ENCODE measurements at regions of chr9 and their contacts with region 1.

Region 1: GRCh38 chr9:124771021-124771866 is at the start of gene NR6A1:
- DNase-seq: peak; percentile 95
- H3K4me3 Mint-ChIP-seq: peak within 1 kb of the TSS; percentile 83
- H3K27ac Mint-ChIP-seq: peak within 1 kb of the TSS; percentile 74
- H3K4me1 Mint-ChIP-seq: peaks cover 30% of the 10 kb centered on the region
- H3K27me3 Mint-ChIP-seq: peaks cover 62% of the 10 kb centered on the region
- total RNA-seq, gene NR6A1: 1.8 TPM

Region 2: DNA sequence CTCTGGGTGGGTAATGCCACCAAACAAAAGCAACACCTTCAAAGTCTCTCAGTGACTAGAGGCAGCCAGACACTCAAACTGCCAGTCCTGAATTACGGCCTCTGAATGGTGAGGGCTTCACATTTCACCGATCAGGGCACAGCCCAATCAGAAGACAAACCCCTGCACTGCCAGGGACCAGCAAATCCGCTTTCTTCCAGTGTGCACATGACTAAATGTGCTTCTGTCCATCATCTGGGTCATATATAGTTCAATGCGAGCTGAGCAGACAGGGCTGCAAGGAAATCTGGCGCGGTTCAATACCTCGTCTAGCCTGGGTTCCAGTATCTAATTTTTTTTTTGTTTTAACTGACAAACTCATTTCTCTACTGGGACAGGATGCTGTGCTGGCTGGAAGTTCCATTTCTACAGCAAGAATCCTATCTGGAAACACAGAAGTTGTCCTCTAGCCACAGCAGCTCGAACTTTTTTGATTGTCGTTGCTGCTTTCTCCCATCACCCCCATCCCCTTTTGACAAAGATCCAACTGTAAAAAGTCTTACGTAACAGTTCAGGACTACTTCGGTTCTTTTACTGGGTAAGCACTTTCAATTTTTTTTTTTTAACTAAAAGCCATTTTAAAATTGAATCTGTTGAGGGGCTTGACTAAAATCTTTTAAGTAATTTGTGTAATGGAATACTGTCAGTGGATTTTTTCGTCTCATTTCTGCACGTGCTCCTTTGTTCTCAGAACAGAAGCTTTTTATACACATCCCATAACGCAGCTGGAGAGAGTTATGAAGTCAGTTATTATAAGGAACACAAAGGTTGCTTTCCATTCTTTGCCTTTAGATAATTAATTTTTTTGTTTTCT is 112.9 kb before region 1 on chr9:
- CTCF ChIA-PET with region 1: no interaction called
- intact Hi-C with region 1: loop called (anchors 2 kb)
- DNase-seq: peak; percentile 75
- H3K4me3 Mint-ChIP-seq: peak overlapping the region; percentile 95
- H3K27ac Mint-ChIP-seq: peak overlapping the region; percentile 89
- H3K4me1 Mint-ChIP-seq: peaks cover 11% of the 10 kb centered on the region
- H3K27me3 Mint-ChIP-seq: no peaks in the 10 kb centered on the region

Region 3: GRCh38 chr9:124735121-124735520 is 36.1 kb before region 1 on chr9:
- CTCF ChIA-PET with region 1: interaction called, 3 read pairs
- intact Hi-C with region 1: loop called (anchors 2 kb)
- DNase-seq: peak; percentile 20
- H3K4me3 Mint-ChIP-seq: no peak overlapping the region
- H3K27ac Mint-ChIP-seq: no peak overlapping the region
- H3K4me1 Mint-ChIP-seq: peaks cover 16% of the 10 kb centered on the region
- H3K27me3 Mint-ChIP-seq: peaks cover 18% of the 10 kb centered on the region

Region 4: DNA sequence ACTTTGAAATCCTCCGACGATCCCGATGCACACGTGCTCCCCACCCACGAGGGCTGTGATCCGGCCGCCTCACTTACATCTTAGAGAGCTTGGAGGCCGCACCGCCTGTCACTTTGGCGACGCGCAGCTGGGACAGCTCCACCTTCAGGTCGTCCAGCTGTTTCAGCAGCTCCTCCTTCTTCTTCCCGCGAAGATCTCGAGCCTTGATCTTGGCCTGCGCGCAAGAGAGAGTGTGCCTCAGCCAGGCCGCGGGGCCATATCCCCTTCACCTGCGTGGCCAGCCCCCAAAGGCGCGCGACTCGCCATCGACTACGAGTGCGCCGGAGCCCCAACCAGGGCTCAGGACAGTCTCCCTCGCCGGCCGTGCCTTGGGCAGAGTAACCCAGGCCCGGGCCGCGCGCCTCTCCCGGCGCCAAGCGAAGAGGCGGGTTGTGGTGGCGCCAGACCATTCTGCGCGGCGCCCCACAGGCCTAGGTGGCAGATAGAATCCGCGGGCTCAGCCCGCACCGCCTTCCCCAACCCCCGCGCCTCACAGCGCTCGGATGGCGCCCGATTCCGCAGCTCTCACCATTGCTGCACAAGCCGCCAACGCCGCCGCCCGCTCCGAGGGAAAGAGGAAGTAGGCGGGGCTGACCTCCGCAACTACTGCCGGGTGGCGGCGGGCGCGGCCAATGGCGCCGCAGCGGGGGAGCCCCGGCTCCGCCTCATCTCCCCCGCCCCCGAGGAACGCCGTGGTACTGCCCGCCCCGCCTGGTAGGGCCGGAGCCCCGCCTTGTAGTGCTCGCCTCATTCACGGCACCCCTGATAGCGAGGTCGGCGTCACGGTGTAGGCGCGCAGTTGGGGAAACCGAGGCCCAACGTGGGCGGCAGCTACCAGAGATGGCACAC is 90.3 kb after region 1 on chr9 and contains the starts of genes ARPC5L and RPL35:
- CTCF ChIA-PET with region 1: interaction called, 36 read pairs
- intact Hi-C with region 1: loop called (anchors 2 kb)
- DNase-seq: peak; percentile 96
- H3K4me3 Mint-ChIP-seq: peak within 1 kb of the TSS; percentile 87
- H3K27ac Mint-ChIP-seq: peak within 1 kb of the TSS; percentile 95
- H3K4me1 Mint-ChIP-seq: peaks cover 46% of the 10 kb centered on the region
- H3K27me3 Mint-ChIP-seq: no peaks in the 10 kb centered on the region
- total RNA-seq, gene ARPC5L: 116 to 123 TPM
- total RNA-seq, gene RPL35: 2,701 to 2,729 TPM

Region 5: DNA sequence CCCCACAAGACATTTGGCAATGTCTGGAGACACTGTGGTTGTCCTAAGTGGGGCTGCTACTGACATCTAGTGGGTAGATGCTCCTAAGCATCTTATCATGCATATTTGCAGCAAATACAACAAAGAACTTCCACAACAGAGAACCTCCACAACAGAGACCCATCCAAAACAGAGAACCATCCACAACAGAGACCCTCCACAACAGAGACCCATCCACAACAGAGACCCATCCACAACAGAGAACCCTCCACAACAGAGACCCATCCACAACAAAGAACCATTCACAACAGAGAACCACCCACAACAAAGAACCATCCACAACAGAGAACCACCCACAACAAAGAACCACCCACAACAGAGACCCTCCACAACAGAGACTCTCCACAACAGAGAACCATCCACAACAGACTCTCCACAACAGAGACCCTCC is 123.5 kb after region 1 on chr9:
- CTCF ChIA-PET with region 1: no interaction called
- intact Hi-C with region 1: loop called (anchors 1 kb)
- DNase-seq: peak; percentile 65
- H3K4me3 Mint-ChIP-seq: no peak overlapping the region
- H3K27ac Mint-ChIP-seq: no peak overlapping the region
- H3K4me1 Mint-ChIP-seq: peaks cover 11% of the 10 kb centered on the region
- H3K27me3 Mint-ChIP-seq: no peaks in the 10 kb centered on the region

Region 6: DNA sequence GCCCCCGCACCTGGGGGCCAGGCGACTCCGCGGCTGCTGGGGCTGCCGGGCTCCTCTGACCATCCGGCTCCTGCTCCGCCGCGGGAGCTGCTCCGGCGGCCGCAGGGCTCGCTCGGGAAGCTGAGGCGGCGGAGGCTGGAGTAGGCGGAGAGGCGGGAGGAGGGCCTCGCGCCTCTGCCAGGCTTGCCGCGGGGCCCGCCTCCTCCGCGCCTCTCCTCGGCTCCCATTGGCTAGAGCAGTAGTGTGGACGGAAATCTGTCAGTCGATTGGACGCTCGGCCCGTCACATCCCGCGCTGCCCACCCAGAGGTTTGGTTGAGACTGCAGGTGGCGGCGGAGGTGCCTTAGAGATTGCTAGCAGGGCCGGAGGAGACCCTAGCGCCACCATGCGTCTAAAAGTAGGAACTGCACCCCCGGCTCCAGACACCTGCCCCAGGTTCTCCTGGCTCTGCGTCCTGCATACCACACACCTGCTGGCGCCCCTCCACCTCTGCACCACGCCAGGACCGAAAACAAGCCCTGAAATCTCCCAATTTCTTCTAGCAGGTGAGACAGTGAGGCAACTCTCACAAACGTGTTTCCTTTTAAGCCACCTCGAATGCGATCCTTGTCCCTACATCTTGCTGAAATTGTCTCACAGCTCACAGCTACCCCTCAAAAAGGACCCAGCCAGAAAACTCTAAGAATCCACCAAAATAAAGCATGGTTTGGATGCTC is 372.3 kb after region 1 on chr9 and contains the start of gene SCAI:
- CTCF ChIA-PET with region 1: interaction called, 7 read pairs
- intact Hi-C with region 1: loop called (anchors 1 kb)
- DNase-seq: peak; percentile 100
- H3K4me3 Mint-ChIP-seq: peak within 1 kb of the TSS; percentile 82
- H3K27ac Mint-ChIP-seq: peak within 1 kb of the TSS; percentile 58
- H3K4me1 Mint-ChIP-seq: peaks cover 40% of the 10 kb centered on the region
- H3K27me3 Mint-ChIP-seq: no peaks in the 10 kb centered on the region
- total RNA-seq, gene SCAI: 9.6 to 11.8 TPM

Region 7: DNA sequence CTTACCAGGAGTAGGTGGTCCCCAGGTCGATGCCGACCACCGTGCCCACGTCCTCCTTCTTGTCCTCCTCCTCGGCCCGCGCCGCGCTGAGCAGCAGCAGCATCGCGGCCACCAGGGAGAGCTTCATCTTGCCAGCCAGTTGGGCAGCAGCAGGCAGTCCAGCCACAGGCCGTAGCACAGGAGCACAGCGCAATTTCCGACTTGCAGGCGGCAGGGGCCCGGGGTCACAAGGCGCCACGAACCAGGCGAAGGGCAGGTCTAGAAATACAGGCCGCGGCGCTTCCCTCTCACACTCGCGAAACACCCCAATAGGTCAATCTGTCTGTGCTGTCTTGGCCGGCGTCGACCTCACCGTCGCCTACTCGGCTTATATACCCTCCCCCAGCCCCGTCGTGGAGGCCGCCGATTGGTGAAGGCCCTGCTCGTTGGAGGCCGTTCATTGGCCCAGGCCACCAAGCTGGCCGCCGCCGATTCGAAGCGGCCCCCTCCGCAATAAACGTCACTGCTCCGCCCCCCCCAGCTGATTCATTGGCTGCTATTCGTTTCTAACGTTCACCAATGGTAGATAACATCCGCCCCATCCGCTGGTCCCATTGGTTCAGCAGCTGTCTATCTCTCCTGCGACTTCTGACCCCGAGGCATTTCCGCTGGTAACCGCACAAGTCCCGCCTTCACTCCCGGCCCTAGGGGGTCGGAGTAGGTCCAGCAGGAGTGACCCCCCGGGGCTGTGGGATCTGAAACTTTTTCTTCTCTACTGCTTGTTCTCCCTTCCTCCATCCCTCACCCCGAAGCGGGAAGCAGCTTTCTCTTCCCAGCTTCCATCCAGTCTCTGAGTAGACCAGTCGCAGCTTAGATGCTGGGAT is 470.0 kb after region 1 on chr9 and contains the start of gene HSPA5:
- CTCF ChIA-PET with region 1: no interaction called
- intact Hi-C with region 1: loop called (anchors 5 kb)
- DNase-seq: peak; percentile 100
- H3K4me3 Mint-ChIP-seq: peak within 1 kb of the TSS; percentile 95
- H3K27ac Mint-ChIP-seq: peak within 1 kb of the TSS; percentile 99
- H3K4me1 Mint-ChIP-seq: peaks cover 44% of the 10 kb centered on the region
- H3K27me3 Mint-ChIP-seq: peaks cover 2% of the 10 kb centered on the region
- total RNA-seq, gene HSPA5: 136 to 138 TPM

Region 8: GRCh38 chr9:125261501-125262293 is 490.5 kb after region 1 on chr9 and contains the start of gene GAPVD1:
- CTCF ChIA-PET with region 1: no interaction called
- intact Hi-C with region 1: no loop called
- DNase-seq: peak; percentile 90
- H3K4me3 Mint-ChIP-seq: peak within 1 kb of the TSS; percentile 98
- H3K27ac Mint-ChIP-seq: peak within 1 kb of the TSS; percentile 86
- H3K4me1 Mint-ChIP-seq: peaks cover 31% of the 10 kb centered on the region
- H3K27me3 Mint-ChIP-seq: no peaks in the 10 kb centered on the region
- total RNA-seq, gene GAPVD1: 38.1 to 40.0 TPM